ENCODE measurements at regions of chr22 and their contacts with region 1.

Region 1: GRCh38 chr22:41264408-41264941 is 21.5 kb downstream of the RANGAP1 start:
- DNase-seq: no peak
- ATAC-seq: no peak
- H3K4me3 ChIP-seq: no peak overlapping the region
- H3K27ac ChIP-seq: no peak overlapping the region
- H3K4me1 ChIP-seq: peaks cover 0 to 21% (median 5%) of the 10 kb centered on the region in 12 donors
- H3K27me3 ChIP-seq: no peaks in the 10 kb centered on the region
- CTCF ChIP-seq: no peak
- POLR2A ChIP-seq: no peak

Region 2: DNA sequence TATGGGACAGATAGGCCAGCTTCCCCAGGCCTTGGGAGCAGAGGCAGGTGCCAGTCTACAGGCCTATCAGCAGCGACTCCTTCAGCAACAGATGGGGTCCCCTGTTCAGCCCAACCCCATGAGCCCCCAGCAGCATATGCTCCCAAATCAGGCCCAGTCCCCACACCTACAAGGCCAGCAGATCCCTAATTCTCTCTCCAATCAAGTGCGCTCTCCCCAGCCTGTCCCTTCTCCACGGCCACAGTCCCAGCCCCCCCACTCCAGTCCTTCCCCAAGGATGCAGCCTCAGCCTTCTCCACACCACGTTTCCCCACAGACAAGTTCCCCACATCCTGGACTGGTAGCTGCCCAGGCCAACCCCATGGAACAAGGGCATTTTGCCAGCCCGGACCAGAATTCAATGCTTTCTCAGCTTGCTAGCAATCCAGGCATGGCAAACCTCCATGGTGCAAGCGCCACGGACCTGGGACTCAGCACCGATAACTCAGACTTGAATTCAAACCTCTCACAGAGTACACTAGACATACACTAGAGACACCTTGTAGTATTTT is 86.0 kb before region 1 on chr22:
- intact Hi-C with region 1: loop called in 1 of 10 experiments (anchors 10 kb)
- DNase-seq: peak; percentile 58 to 88 (median 71)
- ATAC-seq: peak in 3 of 4 donors; percentile 68 to 71 (median 70)
- H3K4me3 ChIP-seq: no peak overlapping the region
- H3K27ac ChIP-seq: no peak overlapping the region
- H3K4me1 ChIP-seq: peaks cover 0 to 20% (median 7%) of the 10 kb centered on the region in 12 donors
- H3K27me3 ChIP-seq: no peaks in the 10 kb centered on the region
- CTCF ChIP-seq: no peak
- POLR2A ChIP-seq: no peak

Region 3: DNA sequence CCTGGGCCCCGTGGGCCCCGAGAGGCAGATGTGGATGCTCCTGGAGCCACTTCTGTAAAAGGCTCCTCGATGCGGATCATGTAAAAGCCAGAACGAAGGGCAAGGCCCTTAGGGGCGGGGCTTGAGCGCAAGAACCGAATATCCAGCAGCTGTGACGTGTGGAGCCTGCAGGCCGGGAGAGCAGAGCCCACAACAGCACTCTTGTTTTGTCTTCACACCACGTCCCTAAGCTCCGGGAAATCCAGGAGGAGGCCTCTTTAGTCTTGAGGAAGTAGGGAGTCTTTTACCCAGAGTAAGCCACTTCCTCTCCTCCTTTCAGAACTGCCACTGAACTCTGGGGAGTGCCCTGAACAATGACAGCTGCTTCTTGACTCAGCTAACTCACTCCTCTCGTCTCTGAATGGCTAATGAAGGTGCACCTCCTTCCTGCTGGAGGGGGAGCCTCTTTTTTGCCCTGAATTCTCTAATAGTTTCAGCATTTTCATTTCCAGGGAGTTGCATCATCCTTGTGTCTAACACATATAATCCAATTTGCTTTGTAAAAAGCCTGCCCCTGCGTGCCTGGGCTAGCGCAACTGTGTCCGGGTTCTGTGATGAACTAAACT is 46.8 kb before region 1 on chr22:
- intact Hi-C with region 1: no loop called
- DNase-seq: peak; percentile 79 to 88 (median 81)
- ATAC-seq: peak; percentile 82 to 95 (median 94)
- H3K4me3 ChIP-seq: peak overlapping the region in 10 of 12 donors; percentile 12 to 54 (median 37)
- H3K27ac ChIP-seq: peak overlapping the region; percentile 25 to 93 (median 85)
- H3K4me1 ChIP-seq: peaks cover 0 to 32% (median 23%) of the 10 kb centered on the region in 12 donors
- H3K27me3 ChIP-seq: no peaks in the 10 kb centered on the region
- CTCF ChIP-seq: no peak
- POLR2A ChIP-seq: peak in 1 of 2 donors; percentile 36

Region 4: DNA sequence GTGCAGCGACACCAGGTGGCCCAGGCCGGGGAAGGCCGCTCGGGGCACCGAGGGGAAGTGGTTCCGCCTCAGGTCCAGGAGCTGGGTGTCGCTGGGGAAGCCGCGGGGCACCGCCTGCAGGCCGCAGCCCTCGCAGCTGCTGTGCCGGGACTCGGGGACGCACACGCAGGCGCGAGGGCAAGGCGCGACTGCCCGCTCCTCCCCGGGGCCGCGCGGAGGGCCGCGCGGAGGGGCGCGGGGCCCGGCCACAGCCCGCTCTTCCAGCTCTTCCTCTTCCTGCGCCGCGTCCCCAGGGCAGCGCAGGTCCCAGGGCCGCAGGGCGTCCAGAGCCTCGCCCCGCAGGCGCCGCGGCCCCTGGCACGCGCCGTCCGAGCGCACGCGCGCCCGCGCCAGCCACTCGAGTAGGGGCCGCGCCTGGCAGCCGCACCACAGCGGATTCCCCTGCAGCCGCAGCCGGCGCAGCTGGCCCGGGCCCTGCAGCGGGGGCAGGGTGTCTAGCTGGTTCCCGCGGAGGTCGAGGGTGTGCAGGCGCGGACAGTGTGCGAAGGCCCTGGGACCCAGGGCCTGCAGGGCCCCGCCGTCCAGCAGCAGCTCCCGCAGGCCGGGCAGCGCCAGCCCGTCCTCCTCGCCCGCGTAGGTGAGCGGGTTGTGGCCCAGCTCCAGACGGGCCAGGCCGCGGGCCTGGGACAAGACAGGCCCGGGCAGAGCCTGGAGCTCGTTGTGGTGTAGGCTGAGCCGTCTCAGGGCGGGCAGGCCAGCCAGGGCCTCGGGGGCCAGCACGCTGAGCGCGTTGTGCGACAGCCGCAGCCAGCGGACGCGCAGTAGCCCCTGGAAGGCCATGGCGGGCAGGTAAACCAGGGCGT is 26.5 kb before region 1 on chr22:
- intact Hi-C with region 1: loop called in 1 of 10 experiments (anchors 2 kb)
- DNase-seq: peak; percentile 74 to 89 (median 80)
- ATAC-seq: peak; percentile 10 to 77 (median 66)
- H3K4me3 ChIP-seq: peak overlapping the region in 11 of 12 donors; percentile 0 to 62 (median 53)
- H3K27ac ChIP-seq: peak overlapping the region in 11 of 12 donors; percentile 10 to 73 (median 58)
- H3K4me1 ChIP-seq: peaks cover 0 to 42% (median 17%) of the 10 kb centered on the region in 12 donors
- H3K27me3 ChIP-seq: no peaks in the 10 kb centered on the region
- CTCF ChIP-seq: peak; percentile 29 to 80 (median 56)
- POLR2A ChIP-seq: no peak

Region 5: GRCh38 chr22:41247703-41248102 is 16.8 kb before region 1 on chr22:
- intact Hi-C with region 1: loop called in 2 of 10 experiments (anchors 1 to 2 kb)
- DNase-seq: peak; percentile 57 to 88 (median 75)
- ATAC-seq: peak; percentile 76 to 84 (median 84)
- H3K4me3 ChIP-seq: no peak overlapping the region
- H3K27ac ChIP-seq: peak overlapping the region in 9 of 12 donors; percentile 43 to 84 (median 69)
- H3K4me1 ChIP-seq: peaks cover 0 to 16% (median 0%) of the 10 kb centered on the region in 12 donors
- H3K27me3 ChIP-seq: no peaks in the 10 kb centered on the region
- CTCF ChIP-seq: no peak
- POLR2A ChIP-seq: no peak

Region 6: GRCh38 chr22:41320416-41321240 is 56.2 kb after region 1 on chr22:
- intact Hi-C with region 1: no loop called
- DNase-seq: no peak
- ATAC-seq: no peak
- H3K4me3 ChIP-seq: no peak overlapping the region
- H3K27ac ChIP-seq: no peak overlapping the region
- H3K4me1 ChIP-seq: peaks cover 0 to 7% (median 0%) of the 10 kb centered on the region in 12 donors
- H3K27me3 ChIP-seq: no peaks in the 10 kb centered on the region
- CTCF ChIP-seq: no peak
- POLR2A ChIP-seq: no peak

Region 7: GRCh38 chr22:41332217-41332939 is 67.9 kb after region 1 on chr22:
- intact Hi-C with region 1: no loop called
- DNase-seq: no peak
- ATAC-seq: no peak
- H3K4me3 ChIP-seq: no peak overlapping the region
- H3K27ac ChIP-seq: no peak overlapping the region
- H3K4me1 ChIP-seq: peaks cover 0 to 21% (median 9%) of the 10 kb centered on the region in 12 donors
- H3K27me3 ChIP-seq: no peaks in the 10 kb centered on the region
- CTCF ChIP-seq: no peak
- POLR2A ChIP-seq: no peak